ENCODE measurements at regions of chr1 and their contacts with region 1.

Region 1: GRCh38 chr1:39098546-39099250 is 72.5 kb downstream of the NDUFS5 start:
- DNase-seq: peak; percentile 71
- H3K4me3 Mint-ChIP-seq: no peak overlapping the region
- H3K27ac Mint-ChIP-seq: no peak overlapping the region
- H3K4me1 Mint-ChIP-seq: peaks cover 22% of the 10 kb centered on the region
- H3K27me3 Mint-ChIP-seq: peaks cover 3% of the 10 kb centered on the region

Region 2: GRCh38 chr1:39110325-39110851 is 11.7 kb after region 1 on chr1:
- CTCF ChIA-PET with region 1: interaction called, 28 read pairs
- POLR2A ChIA-PET with region 1: interaction called, 4 read pairs
- DNase-seq: no peak
- H3K4me3 Mint-ChIP-seq: no peak overlapping the region
- H3K27ac Mint-ChIP-seq: no peak overlapping the region
- H3K4me1 Mint-ChIP-seq: peaks cover 15% of the 10 kb centered on the region
- H3K27me3 Mint-ChIP-seq: peaks cover 2% of the 10 kb centered on the region

Region 3: DNA sequence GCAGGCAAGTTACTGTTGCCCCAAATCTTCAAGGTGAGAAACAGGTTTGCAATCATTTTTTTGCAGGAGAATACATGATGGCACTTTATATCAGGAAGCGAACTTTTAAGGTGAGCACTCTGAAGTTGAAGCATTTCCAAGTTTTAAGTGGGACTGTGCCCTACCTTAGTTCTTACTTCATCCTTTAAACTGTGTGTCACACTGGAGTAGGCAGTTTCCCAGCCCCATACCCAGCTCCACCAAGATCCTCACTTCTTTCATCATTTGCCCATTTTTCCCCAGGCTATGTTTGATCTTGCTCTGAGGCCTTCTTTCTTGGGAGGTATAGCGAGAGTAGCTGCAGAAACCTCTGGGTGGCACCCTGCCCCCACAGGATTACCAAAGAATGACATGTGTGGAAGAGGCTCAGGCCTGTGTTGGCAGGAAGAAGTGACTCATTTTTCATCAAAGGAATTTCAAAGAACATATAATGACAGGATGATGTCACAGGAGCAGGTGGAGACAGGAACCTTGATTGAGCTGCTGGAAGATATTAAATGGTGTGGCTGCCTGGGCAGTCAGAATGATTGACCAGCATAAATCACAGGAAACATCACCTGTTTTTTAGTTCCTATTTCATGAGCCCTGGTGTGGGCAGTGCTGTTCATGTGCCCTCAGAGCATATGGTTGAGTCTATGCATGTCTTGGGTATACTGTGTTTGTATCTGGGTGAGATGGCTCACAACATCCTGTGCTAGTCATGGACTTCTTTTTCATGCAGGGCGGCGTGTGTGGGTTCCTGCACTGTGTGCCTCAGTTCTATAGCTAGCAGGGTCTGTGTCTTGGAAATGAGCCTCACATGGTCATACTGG is 85.0 kb after region 1 on chr1:
- CTCF ChIA-PET with region 1: interaction called, 71 read pairs
- POLR2A ChIA-PET with region 1: no interaction called
- DNase-seq: peak; percentile 84
- H3K4me3 Mint-ChIP-seq: no peak overlapping the region
- H3K27ac Mint-ChIP-seq: peak overlapping the region; percentile 88
- H3K4me1 Mint-ChIP-seq: peaks cover 50% of the 10 kb centered on the region
- H3K27me3 Mint-ChIP-seq: no peaks in the 10 kb centered on the region

Region 4: DNA sequence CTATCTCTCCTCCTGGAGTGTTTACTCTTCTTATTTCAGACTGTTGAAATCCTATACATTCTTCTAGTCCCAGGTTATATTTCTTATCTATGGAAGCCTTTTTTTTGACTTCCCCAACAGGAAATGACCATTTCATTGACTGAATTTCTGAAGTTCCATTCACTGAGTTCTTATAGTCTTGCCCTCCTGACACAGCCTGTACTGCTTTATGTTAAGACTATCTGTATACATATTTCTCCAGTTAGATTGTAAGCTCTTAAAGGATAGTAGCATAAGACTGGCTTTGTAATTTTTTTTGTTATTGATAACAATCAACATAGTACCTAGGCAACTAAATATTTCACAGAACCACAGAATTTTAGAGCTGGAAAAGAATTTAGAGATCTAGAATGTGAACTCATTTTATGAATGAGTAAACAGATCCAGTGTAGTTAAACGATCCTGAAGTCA is 90.9 kb after region 1 on chr1:
- CTCF ChIA-PET with region 1: interaction called, 71 read pairs
- POLR2A ChIA-PET with region 1: interaction called, 6 read pairs
- DNase-seq: no peak
- H3K4me3 Mint-ChIP-seq: no peak overlapping the region
- H3K27ac Mint-ChIP-seq: peak overlapping the region; percentile 37
- H3K4me1 Mint-ChIP-seq: peaks cover 86% of the 10 kb centered on the region
- H3K27me3 Mint-ChIP-seq: no peaks in the 10 kb centered on the region

Region 5: GRCh38 chr1:39258146-39258924 is 159.6 kb after region 1 on chr1:
- CTCF ChIA-PET with region 1: interaction called, 28 read pairs
- POLR2A ChIA-PET with region 1: no interaction called
- DNase-seq: peak; percentile 61
- H3K4me3 Mint-ChIP-seq: no peak overlapping the region
- H3K27ac Mint-ChIP-seq: peak overlapping the region; percentile 11
- H3K4me1 Mint-ChIP-seq: peaks cover 28% of the 10 kb centered on the region
- H3K27me3 Mint-ChIP-seq: no peaks in the 10 kb centered on the region

Region 6: DNA sequence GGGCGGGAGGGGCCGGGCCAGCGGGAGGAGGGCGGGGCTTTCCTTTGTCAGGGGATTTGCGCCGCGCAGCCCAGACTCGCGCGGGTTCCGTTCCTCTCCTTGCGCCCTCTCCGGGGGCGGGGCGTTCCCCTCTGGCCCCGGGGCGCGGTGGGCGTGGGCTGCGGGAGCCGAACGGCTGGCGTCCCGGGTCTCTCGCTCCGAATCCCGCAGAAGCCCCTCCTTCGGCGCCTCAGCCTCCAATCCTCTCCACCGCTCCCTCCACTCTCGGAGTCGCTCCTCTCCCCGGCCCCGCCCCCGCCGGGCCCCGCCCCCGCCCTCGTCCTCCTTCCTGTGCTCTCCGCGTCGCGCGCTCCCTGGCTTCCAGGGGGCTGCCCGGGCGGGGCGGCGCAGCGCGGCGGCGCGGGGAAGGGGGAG is 309.9 kb after region 1 on chr1:
- CTCF ChIA-PET with region 1: interaction called, 14 read pairs
- POLR2A ChIA-PET with region 1: no interaction called
- DNase-seq: peak; percentile 83
- H3K4me3 Mint-ChIP-seq: peak overlapping the region; percentile 81
- H3K27ac Mint-ChIP-seq: no peak overlapping the region
- H3K4me1 Mint-ChIP-seq: peaks cover 57% of the 10 kb centered on the region
- H3K27me3 Mint-ChIP-seq: no peaks in the 10 kb centered on the region

Region 7: GRCh38 chr1:39538588-39539465 is 440.1 kb after region 1 on chr1:
- CTCF ChIA-PET with region 1: interaction called, 14 read pairs
- POLR2A ChIA-PET with region 1: no interaction called
- DNase-seq: peak; percentile 62
- H3K4me3 Mint-ChIP-seq: no peak overlapping the region
- H3K27ac Mint-ChIP-seq: no peak overlapping the region
- H3K4me1 Mint-ChIP-seq: peaks cover 7% of the 10 kb centered on the region
- H3K27me3 Mint-ChIP-seq: no peaks in the 10 kb centered on the region

Measured in activated CD4-positive, alpha-beta memory T cell treated with anti-CD3 and anti-CD28 coated beads, Interleukin-2, amount 10 ng/mL, durations not matched to agents 7 days and 5 days (primary cell).